ENCODE measurements at regions of chr12 and their contacts with region 1.

Region 1: DNA sequence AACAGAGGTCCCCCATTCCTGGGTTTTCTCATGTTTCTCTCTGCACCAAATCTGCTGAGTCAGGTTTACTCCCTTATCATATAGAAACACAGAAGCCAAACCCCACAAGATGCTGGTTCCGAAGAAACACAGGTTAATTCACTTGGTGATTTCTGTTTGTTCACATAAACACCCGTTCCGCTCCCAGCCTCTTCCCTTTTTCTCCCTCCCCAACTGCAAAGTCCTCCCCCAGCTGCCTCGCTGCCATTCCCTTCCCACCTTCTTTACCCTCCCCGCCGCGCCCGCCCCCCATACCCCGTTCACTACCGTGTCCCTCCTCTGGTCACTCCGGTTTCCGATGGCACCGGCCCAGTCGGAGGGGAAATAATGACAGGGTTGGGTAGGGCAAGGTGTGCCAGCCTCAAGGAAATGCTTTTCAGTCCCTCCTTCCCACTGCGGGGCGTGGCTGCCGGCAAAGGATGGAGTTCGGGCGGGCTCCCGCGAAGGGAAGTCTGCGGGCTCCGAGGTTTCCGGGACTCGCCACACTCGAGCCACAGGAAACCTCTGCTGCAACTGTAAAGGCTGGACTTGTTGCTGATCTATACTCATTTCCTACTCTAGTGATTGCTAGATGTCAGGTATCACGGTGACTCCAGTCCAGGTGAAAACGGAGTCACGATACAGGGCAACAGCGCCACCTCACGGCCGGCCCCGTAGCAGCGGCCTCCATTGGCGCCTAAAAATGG is at the start of gene STYK1:
- DNase-seq: peak; percentile 12 to 29
- ATAC-seq: peak; percentile 23 to 66 (median 46)
- H3K4me3 ChIP-seq: peak within 1 kb of the TSS; percentile 22 to 56 (median 54)
- H3K27ac ChIP-seq: no peak within 1 kb of the TSS
- H3K4me1 ChIP-seq: peaks cover 0 to 18% (median 8%) of the 10 kb centered on the region in 9 donors
- H3K27me3 ChIP-seq: peaks cover 0 to 81% (median 29%) of the 10 kb centered on the region in 7 donors
- CTCF ChIP-seq: peak; percentile 53 to 84 (median 76)
- total RNA-seq, gene STYK1: 0.15 to 1.2 (median 0.15) TPM in 3 of 10 donors, not detected in the others

Region 2: GRCh38 chr12:10613349-10614055 is 60.3 kb before region 1 on chr12 and contains the start of gene MAGOHB:
- intact Hi-C with region 1: loop called in 2 of 10 experiments (anchors 10 kb)
- DNase-seq: peak; percentile 97
- ATAC-seq: peak; percentile 99 to 100 (median 99)
- H3K4me3 ChIP-seq: peak within 1 kb of the TSS; percentile 62 to 97 (median 83)
- H3K27ac ChIP-seq: peak within 1 kb of the TSS; percentile 11 to 95 (median 87)
- H3K4me1 ChIP-seq: peaks cover 0 to 24% (median 14%) of the 10 kb centered on the region in 9 donors
- H3K27me3 ChIP-seq: peaks cover 0 to 5% (median 0%) of the 10 kb centered on the region in 7 donors
- CTCF ChIP-seq: no peak
- total RNA-seq, gene MAGOHB: 10.9 to 17.1 (median 13.4) TPM